ENCODE measurements at regions of chr1 and their contacts with region 1.

Region 1: GRCh38 chr1:206912445-206913095 is 9.2 kb downstream of the FCMR start:
- DNase-seq: peak; percentile 76
- ATAC-seq: peak; percentile 39
- H3K4me3 Mint-ChIP-seq: no peak overlapping the region
- H3K27ac Mint-ChIP-seq: no peak overlapping the region
- H3K4me1 Mint-ChIP-seq: peaks cover 88% of the 10 kb centered on the region
- H3K27me3 Mint-ChIP-seq: no peaks in the 10 kb centered on the region

Region 2: DNA sequence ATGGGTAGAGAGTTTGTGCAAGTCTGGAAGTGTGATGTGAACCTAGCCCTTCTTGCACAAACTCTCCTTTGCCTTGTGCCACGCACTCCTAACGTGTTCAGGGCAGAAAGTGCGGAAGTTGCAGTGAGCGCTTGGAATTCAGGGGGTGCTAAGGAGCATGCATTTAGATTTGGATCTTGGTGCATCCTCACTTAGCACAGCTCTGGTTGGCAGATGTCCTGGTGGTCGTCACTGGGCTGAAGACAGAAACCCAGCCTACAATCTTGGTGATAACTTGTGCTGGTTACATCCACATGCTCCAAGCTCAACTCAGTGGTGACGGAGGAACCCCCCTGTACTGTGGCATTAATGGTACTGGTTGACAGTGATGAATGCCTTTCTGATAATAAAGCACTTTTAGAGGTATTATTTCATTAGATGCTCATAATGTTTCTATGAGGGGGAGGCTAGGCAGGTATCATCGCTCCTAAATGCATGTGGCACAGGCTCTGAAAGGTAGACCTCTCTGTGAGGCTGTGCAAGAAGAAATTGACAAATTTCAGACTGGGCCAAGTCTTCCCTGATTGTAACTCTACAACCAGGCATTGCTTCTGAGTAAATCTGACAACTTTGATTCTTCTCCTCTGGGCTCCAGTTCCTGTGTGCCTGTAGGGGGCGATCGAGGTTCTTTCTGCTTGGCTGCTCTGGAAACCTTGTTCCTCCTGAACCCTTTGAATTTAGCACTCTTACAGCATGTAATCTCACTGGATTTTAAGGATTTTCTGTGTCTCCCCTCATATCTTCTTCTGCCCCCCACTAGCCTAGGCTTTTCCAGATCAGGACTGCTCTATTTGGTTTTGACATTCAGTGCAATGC is 187.2 kb before region 1 on chr1:
- CTCF ChIA-PET with region 1: interaction called, 63 read pairs
- POLR2A ChIA-PET with region 1: no interaction called
- intact Hi-C with region 1: loop called (anchors 1 kb)
- DNase-seq: peak; percentile 85
- ATAC-seq: peak; percentile 72
- H3K4me3 Mint-ChIP-seq: no peak overlapping the region
- H3K27ac Mint-ChIP-seq: peak overlapping the region; percentile 29
- H3K4me1 Mint-ChIP-seq: peaks cover 49% of the 10 kb centered on the region
- H3K27me3 Mint-ChIP-seq: no peaks in the 10 kb centered on the region

Region 3: DNA sequence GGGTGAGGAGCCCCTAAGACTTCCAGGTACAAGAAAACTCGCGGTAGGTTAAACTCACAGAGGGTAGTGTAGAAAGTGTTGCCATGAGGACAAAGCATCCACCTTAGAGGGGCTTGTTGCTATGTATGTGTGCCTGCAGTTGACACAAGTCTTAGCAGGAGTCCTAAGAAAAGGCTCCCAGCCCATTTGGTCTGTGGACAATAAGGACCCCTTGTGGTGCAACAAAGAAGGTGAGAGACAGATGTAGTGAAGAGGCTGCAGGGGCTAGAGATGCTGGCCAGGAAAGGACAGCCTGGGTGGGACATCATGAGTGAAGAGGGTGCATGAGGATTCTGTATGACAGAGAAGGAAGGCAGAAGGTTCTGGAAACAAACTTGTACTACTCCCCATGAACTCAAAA is 104.0 kb before region 1 on chr1:
- CTCF ChIA-PET with region 1: interaction called, 90 read pairs
- POLR2A ChIA-PET with region 1: no interaction called
- intact Hi-C with region 1: loop called (anchors 1 to 2 kb)
- DNase-seq: peak; percentile 63
- ATAC-seq: peak; percentile 83
- H3K4me3 Mint-ChIP-seq: no peak overlapping the region
- H3K27ac Mint-ChIP-seq: no peak overlapping the region
- H3K4me1 Mint-ChIP-seq: peaks cover 39% of the 10 kb centered on the region
- H3K27me3 Mint-ChIP-seq: peaks cover 2% of the 10 kb centered on the region

Region 4: DNA sequence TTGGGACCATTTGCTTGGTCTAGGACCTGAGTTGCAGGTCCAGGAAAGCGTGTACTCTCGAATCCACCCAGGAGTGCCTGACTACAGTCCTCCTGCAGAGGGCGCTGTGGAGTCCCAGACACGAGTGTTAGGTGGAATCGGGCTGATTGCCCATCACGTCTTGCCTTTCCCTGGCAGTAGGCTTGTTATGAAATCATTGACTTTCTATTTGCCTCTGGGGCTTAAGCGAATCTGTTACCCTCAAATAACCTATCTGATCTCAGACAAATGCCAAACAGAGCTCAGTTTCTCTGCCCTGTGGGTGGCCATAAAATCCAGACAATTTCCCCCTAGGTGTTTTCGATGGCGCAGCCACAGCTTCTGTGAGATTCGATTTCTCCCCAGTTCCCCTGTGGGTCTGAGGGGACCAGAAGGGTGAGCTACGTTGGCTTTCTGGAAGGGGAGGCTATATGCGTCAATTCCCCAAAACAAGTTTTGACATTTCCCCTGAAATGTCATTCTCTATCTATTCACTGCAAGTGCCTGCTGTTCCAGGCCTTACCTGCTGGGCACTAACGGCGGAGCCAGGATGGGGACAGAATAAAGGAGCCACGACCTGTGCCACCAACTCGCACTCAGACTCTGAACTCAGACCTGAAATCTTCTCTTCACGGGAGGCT is 47.4 kb before region 1 on chr1 and contains the start of gene IL20:
- CTCF ChIA-PET with region 1: interaction called, 306 read pairs
- POLR2A ChIA-PET with region 1: interaction called, 3 read pairs
- intact Hi-C with region 1: loop called (anchors 1 kb)
- DNase-seq: peak; percentile 95
- ATAC-seq: peak; percentile 96
- H3K4me3 Mint-ChIP-seq: no peak within 1 kb of the TSS
- H3K27ac Mint-ChIP-seq: no peak within 1 kb of the TSS
- H3K4me1 Mint-ChIP-seq: peaks cover 18% of the 10 kb centered on the region
- H3K27me3 Mint-ChIP-seq: peaks cover 8% of the 10 kb centered on the region
- total RNA-seq, gene IL20: not detected

Region 5: DNA sequence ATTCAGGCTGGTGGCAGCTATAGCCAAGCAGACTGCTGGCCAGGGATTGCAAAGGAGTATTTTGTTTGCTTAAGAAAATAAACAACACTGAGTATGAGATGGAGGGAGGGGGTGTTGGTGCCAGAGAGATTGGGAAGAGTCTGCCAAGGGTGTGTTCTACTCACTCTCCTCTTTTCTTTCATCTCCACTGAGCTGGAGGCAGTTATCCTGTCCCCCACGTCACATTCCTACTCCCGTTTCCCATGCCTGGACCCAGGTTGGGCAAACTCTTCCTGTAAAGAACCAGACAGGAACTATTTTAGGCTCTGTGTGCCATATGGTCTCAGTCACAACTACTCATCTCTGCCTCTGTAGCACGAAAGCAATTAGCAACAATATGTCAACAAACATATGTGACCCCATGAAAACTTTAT is 16.7 kb before region 1 on chr1:
- CTCF ChIA-PET with region 1: interaction called, 30 read pairs
- POLR2A ChIA-PET with region 1: interaction called, 3 read pairs
- intact Hi-C with region 1: loop called in 1 of 2 experiments (anchors 2 kb)
- DNase-seq: no peak
- ATAC-seq: no peak
- H3K4me3 Mint-ChIP-seq: no peak overlapping the region
- H3K27ac Mint-ChIP-seq: peak overlapping the region; percentile 49
- H3K4me1 Mint-ChIP-seq: peaks cover 88% of the 10 kb centered on the region
- H3K27me3 Mint-ChIP-seq: no peaks in the 10 kb centered on the region

Region 6: GRCh38 chr1:206982216-206982615 is 69.6 kb after region 1 on chr1:
- CTCF ChIA-PET with region 1: interaction called, 41 read pairs
- POLR2A ChIA-PET with region 1: no interaction called
- intact Hi-C with region 1: loop called (anchors 1 kb)
- DNase-seq: peak; percentile 74
- ATAC-seq: peak; percentile 81
- H3K4me3 Mint-ChIP-seq: no peak overlapping the region
- H3K27ac Mint-ChIP-seq: no peak overlapping the region
- H3K4me1 Mint-ChIP-seq: peaks cover 3% of the 10 kb centered on the region
- H3K27me3 Mint-ChIP-seq: peaks cover 2% of the 10 kb centered on the region